ENCODE measurements at regions of chr16 and their contacts with region 1.

Region 1: DNA sequence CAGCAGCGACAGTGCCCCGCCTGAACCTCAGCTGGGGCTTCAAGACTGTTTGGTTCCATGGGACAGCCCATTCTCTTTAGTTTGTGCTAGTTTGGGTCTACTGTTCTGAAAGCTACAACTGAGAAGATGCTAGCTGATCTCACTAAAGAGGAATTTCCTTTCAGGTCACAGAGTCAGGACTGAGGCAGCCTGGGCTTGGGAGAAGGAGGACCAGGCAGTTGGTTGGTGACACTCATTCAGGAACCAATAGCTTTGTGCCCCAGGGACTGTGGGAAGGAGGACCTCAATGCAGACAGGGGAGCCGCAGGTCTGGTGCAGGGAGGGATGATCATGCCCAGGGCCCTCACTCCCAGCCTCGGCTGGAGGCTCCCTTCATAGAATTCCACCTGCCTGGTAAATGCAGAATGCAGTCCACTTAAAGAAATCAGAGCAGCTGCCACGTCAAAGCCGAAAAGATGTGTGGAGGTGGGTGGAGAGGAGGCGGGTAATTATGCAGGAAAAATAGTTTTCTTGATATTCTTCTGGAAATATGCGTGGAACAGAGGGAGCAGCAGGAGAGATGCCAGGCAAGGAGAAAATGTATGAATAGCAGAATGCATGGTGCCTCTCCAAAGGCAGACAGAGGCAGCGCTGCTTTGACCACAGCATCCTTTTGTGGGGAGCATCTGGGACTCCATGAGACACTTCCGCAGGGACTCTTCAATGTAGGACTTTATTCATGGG is 32.6 kb upstream of the ZFP90 start:
- DNase-seq: no peak
- H3K4me3 ChIP-seq: no peak overlapping the region
- H3K27ac ChIP-seq: no peak overlapping the region
- H3K4me1 ChIP-seq: no peaks in the 10 kb centered on the region
- H3K27me3 ChIP-seq: no peaks in the 10 kb centered on the region
- CTCF ChIP-seq: no peak

Region 2: DNA sequence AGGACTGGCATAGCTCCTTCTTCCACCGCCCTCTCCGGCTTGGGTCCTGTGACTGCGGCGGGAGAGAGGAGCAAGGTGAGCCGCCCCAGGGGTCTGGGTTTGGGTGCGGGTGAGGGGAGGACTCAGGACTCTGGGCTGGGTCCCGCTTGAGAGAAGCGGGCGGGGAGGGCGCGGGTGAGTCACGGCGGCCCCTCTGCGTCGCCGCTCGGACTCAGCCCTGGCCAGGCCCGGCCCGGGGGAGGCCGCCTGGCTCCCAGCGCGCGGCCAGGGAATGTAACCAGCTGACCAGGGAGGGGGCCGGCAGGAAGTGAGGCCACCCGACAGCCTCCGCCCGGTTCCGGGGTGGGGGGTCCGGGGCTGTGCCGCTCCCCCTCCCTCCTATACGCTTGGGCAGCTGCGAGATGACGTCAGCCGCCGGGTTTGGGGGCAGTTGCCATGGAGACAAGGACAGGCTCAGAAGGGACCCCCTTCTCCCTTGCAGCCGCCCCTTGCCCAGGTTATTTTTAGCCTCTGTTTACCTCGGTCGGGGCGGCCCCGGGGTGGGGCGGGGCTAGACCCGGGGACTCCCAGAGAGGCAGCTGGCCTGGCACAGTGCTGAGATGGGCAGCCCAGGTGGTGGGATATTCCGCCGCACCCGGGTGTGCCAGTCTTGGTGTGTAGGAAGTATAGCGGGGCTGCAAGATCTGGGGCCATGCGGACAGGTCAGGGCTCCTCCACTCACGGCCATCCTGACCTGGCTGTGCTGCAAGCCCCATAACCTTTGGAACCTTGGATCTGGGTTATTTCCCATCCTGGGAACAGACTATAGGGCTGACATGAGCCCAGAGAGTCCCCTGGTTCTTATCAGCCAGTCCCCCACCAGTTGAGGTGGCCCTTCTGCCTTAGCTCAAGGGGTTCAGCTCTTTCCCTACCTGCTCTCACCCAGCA is 976.2 kb before region 1 on chr16:
- intact Hi-C with region 1: no loop called
- DNase-seq: peak; percentile 59
- H3K4me3 ChIP-seq: peak overlapping the region; percentile 62
- H3K27ac ChIP-seq: peak overlapping the region; percentile 72
- H3K4me1 ChIP-seq: peaks cover 14% of the 10 kb centered on the region
- H3K27me3 ChIP-seq: peaks cover 5% of the 10 kb centered on the region
- CTCF ChIP-seq: no peak

Region 3: GRCh38 chr16:68396481-68396880 is 110.0 kb before region 1 on chr16:
- intact Hi-C with region 1: loop called (anchors 2 kb)
- DNase-seq: peak; percentile 70
- H3K4me3 ChIP-seq: no peak overlapping the region
- H3K27ac ChIP-seq: no peak overlapping the region
- H3K4me1 ChIP-seq: no peaks in the 10 kb centered on the region
- H3K27me3 ChIP-seq: no peaks in the 10 kb centered on the region
- CTCF ChIP-seq: peak; percentile 62

Region 4: GRCh38 chr16:68452176-68452575 is 54.3 kb before region 1 on chr16:
- intact Hi-C with region 1: loop called (anchors 5 kb)
- DNase-seq: no peak
- H3K4me3 ChIP-seq: no peak overlapping the region
- H3K27ac ChIP-seq: no peak overlapping the region
- H3K4me1 ChIP-seq: peaks cover 8% of the 10 kb centered on the region
- H3K27me3 ChIP-seq: peaks cover 2% of the 10 kb centered on the region
- CTCF ChIP-seq: no peak

Region 5: GRCh38 chr16:69465083-69465721 is 958.7 kb after region 1 on chr16:
- intact Hi-C with region 1: no loop called
- DNase-seq: peak; percentile 27
- H3K4me3 ChIP-seq: no peak overlapping the region
- H3K27ac ChIP-seq: no peak overlapping the region
- H3K4me1 ChIP-seq: no peaks in the 10 kb centered on the region
- H3K27me3 ChIP-seq: no peaks in the 10 kb centered on the region
- CTCF ChIP-seq: no peak